ENCODE measurements at regions of chr6 and their contacts with region 1.

Region 1: DNA sequence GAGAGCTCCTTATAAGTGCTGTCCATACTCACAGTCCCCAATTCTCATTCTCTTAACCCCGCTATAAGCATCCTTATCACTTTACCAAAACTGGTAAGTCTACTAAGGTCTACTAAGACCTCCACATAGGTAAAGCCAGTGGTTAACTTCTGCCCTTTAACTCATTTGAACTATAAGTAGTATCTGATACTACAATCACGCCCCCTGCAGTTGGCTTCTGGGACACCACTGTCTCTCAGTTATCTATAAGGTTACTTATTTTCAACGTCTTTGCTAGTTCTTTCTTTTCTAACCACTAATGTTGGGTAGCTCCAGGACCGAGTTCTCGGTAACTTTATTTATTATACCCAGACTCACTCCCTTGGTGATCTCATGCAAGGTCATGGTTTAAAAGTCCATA is 142.6 kb downstream of the ARHGAP18 start:
- DNase-seq: peak in 5 of 7 donors; percentile 19 to 62 (median 31)
- H3K4me3 ChIP-seq: no peak overlapping the region
- H3K27ac ChIP-seq: no peak overlapping the region
- H3K4me1 ChIP-seq: no peaks in the 10 kb centered on the region
- H3K27me3 ChIP-seq: no peaks in the 10 kb centered on the region
- CTCF ChIP-seq: peak in 4 of 6 experiments; percentile 26 to 42 (median 34)
- POLR2A ChIP-seq: no peak

Region 2: GRCh38 chr6:129454488-129454887 is 112.9 kb before region 1 on chr6:
- intact Hi-C with region 1: no loop called
- DNase-seq: no peak
- H3K4me3 ChIP-seq: no peak overlapping the region
- H3K27ac ChIP-seq: no peak overlapping the region
- H3K4me1 ChIP-seq: no peaks in the 10 kb centered on the region
- H3K27me3 ChIP-seq: no peaks in the 10 kb centered on the region
- CTCF ChIP-seq: no peak
- POLR2A ChIP-seq: no peak

Region 3: DNA sequence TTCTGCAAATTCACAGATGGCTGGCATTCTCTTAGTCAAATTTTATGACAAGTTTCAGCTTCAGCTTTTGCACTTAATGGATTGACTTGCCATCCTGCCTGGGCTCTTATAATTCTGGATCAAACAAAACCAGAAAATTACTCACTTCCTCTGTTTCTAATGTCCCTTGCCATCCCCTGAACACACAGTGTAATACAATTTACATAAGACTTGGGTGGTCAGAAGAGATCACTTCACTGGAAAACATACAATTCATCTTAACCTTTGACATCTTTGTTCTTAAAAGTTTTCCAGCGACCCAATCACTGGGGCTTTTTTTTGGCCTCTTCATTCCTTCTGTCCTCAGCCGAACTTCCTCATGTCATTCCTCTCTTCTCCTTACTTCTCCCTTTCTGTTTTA is 56.4 kb before region 1 on chr6:
- intact Hi-C with region 1: loop called in 1 of 2 experiments (anchors 10 kb)
- DNase-seq: no peak
- H3K4me3 ChIP-seq: no peak overlapping the region
- H3K27ac ChIP-seq: no peak overlapping the region
- H3K4me1 ChIP-seq: peaks cover 0 to 5% of the 10 kb centered on the region in 2 donors
- H3K27me3 ChIP-seq: no peaks in the 10 kb centered on the region
- CTCF ChIP-seq: no peak
- POLR2A ChIP-seq: no peak

Region 4: DNA sequence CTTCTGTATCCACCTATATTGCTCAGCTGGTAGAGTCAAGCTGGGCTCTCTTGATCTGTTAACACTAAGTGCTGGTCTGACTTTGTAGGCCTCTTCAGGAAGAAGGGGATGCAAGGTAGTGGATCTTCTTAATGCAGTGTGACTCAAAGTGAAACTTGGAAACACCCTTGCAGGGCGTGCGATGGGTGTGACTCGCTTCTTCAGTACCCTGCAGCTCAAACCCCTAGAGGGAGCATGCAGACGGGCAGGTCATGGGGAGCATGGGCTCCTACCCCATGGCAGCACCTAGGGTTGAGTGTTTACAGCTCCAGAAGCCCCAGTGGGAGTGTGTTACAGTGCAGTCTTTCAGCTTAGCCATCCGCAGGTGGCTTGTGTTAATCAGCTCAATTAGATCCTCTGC is 656.1 kb after region 1 on chr6:
- intact Hi-C with region 1: no loop called
- DNase-seq: no peak
- H3K4me3 ChIP-seq: no peak overlapping the region
- H3K27ac ChIP-seq: no peak overlapping the region
- H3K4me1 ChIP-seq: no peaks in the 10 kb centered on the region
- H3K27me3 ChIP-seq: no peaks in the 10 kb centered on the region
- CTCF ChIP-seq: no peak
- POLR2A ChIP-seq: no peak